Activated naive CD4-positive, alpha-beta T cell treated with anti-CD3 and anti-CD28 coated beads for 36 hours (primary cell): ENCODE measurements at regions of chr12 and their contacts with region 1.

Region 1: DNA sequence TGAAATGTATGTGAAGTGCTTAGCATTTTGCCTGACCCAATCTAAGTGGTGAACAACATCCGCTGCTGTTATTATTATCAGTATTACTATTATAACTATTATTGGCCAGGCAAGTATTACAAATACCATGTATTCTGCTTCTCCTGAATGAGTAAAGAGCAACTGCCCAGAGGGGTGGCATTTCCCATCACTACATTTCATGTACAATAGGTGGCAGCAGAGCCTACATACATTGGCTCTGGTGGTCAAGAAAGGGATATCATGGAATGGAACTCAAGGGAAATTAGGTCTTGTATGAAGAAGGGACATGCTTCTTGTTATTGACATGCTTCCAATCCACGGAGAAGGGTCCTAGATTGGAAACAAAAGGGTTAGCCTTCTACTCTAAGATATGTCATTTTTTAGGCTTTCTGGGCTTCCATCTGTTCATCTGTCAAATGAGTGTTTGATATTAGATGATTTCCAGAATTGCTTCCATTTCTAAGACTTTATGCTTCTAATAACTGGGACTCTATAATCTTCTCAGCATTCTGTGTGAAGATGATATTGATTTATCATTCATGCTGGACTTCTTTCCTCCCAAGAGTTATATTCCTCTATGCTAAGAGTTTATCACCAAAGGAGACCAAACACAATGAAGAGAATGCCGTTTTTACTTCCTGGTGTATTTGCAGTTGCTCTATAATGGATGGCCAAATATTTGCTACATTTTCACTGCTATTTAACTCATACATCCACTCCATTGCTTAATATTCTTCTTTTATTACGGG is 239.1 kb downstream of the SSPN start:
- DNase-seq: peak; percentile 34
- H3K4me3 Mint-ChIP-seq: no peak overlapping the region
- H3K27ac Mint-ChIP-seq: no peak overlapping the region
- H3K4me1 Mint-ChIP-seq: no peaks in the 10 kb centered on the region
- H3K27me3 Mint-ChIP-seq: no peaks in the 10 kb centered on the region

Region 2: GRCh38 chr12:26523708-26524150 is 89.2 kb after region 1 on chr12:
- CTCF ChIA-PET with region 1: no interaction called
- intact Hi-C with region 1: loop called (anchors 1 kb)
- DNase-seq: no peak
- H3K4me3 Mint-ChIP-seq: no peak overlapping the region
- H3K27ac Mint-ChIP-seq: no peak overlapping the region
- H3K4me1 Mint-ChIP-seq: peaks cover 10% of the 10 kb centered on the region
- H3K27me3 Mint-ChIP-seq: no peaks in the 10 kb centered on the region

Region 3: GRCh38 chr12:26614020-26614616 is 179.6 kb after region 1 on chr12:
- CTCF ChIA-PET with region 1: no interaction called
- intact Hi-C with region 1: loop called (anchors 1 kb)
- DNase-seq: peak; percentile 51
- H3K4me3 Mint-ChIP-seq: no peak overlapping the region
- H3K27ac Mint-ChIP-seq: no peak overlapping the region
- H3K4me1 Mint-ChIP-seq: no peaks in the 10 kb centered on the region
- H3K27me3 Mint-ChIP-seq: no peaks in the 10 kb centered on the region

Region 4: DNA sequence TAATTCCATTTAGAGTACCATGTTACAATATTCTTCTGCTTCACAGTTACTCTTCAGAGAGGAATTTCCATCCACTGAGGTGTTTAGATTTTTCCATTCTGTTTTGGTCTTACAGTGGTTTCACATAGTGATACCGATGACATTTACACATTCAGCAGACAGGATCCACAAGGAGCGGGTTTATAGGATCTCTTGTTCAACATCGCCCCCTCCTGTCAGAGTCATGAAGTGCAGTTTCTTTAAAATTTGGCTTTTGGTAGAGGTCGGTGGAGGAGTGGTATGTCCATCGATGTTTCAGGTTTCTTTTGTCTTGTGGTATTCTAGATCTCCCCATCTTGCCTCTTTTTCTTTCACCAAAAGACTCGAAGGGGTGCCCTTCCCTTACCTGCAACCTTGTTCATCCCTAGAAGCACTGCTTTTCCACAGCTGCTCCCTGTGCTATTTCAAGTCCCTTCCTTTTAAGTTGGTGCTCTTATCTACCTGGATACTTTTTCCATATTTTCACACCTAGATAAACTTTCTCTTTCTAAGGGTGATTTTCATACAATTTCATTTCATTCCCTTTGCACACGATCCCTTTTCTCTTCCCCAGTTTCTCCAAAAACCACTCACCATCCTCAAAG is 217.2 kb after region 1 on chr12:
- CTCF ChIA-PET with region 1: interaction called, 3 read pairs
- intact Hi-C with region 1: loop called (anchors 2 kb)
- DNase-seq: peak; percentile 59
- H3K4me3 Mint-ChIP-seq: no peak overlapping the region
- H3K27ac Mint-ChIP-seq: no peak overlapping the region
- H3K4me1 Mint-ChIP-seq: no peaks in the 10 kb centered on the region
- H3K27me3 Mint-ChIP-seq: no peaks in the 10 kb centered on the region

Region 5: GRCh38 chr12:26701604-26702215 is 267.2 kb after region 1 on chr12:
- CTCF ChIA-PET with region 1: no interaction called
- intact Hi-C with region 1: loop called (anchors 2 kb)
- DNase-seq: no peak
- H3K4me3 Mint-ChIP-seq: no peak overlapping the region
- H3K27ac Mint-ChIP-seq: no peak overlapping the region
- H3K4me1 Mint-ChIP-seq: no peaks in the 10 kb centered on the region
- H3K27me3 Mint-ChIP-seq: no peaks in the 10 kb centered on the region